Body of pancreas (tissue), 4 donors: ENCODE measurements at regions of chr11 and their contacts with region 1.

Region 1: GRCh38 chr11:22006901-22007300 is 186.0 kb upstream of the ANO5 start:
- DNase-seq: no peak
- ATAC-seq: no peak
- H3K4me3 ChIP-seq: no peak overlapping the region
- H3K27ac ChIP-seq: no peak overlapping the region
- H3K4me1 ChIP-seq: no peaks in the 10 kb centered on the region
- H3K27me3 ChIP-seq: no peaks in the 10 kb centered on the region
- CTCF ChIP-seq: no peak
- POLR2A ChIP-seq: no peak

Region 2: GRCh38 chr11:21948865-21949264 is 58.0 kb before region 1 on chr11:
- intact Hi-C with region 1: loop called (anchors 10 kb)
- DNase-seq: no peak
- ATAC-seq: no peak
- H3K4me3 ChIP-seq: no peak overlapping the region
- H3K27ac ChIP-seq: no peak overlapping the region
- H3K4me1 ChIP-seq: peaks cover 3% of the 10 kb centered on the region
- H3K27me3 ChIP-seq: no peaks in the 10 kb centered on the region
- CTCF ChIP-seq: no peak
- POLR2A ChIP-seq: no peak